Head of caudate nucleus (tissue), 42 donors: ENCODE measurements at regions of chr3 and their contacts with region 1.

Region 1: GRCh38 chr3:50321336-50322114 is 1.0 kb downstream of the HYAL2 start:
- DNase-seq: peak; percentile 77 to 97 (median 91)

Region 2: DNA sequence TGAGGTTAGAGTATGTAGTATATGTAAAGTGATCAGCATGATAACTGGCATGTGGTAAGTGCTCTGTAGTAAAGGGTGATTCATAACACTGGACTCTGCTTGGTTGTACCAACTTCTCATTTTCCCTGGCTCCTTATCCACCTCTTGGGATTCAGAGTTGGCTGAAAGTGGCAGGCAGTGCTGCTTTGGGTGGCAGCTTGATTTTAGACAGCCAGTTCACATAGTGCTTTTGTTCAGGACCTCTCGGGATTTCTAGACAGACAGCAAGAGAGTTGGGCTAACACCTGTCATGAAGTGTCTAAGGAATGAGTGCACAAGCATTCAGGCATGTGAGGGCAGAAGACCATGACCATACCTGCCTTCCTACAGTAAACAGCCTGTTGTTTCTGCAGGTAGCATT is 312.6 kb before region 1 on chr3:
- intact Hi-C with region 1: no loop called
- DNase-seq: no peak

Region 3: DNA sequence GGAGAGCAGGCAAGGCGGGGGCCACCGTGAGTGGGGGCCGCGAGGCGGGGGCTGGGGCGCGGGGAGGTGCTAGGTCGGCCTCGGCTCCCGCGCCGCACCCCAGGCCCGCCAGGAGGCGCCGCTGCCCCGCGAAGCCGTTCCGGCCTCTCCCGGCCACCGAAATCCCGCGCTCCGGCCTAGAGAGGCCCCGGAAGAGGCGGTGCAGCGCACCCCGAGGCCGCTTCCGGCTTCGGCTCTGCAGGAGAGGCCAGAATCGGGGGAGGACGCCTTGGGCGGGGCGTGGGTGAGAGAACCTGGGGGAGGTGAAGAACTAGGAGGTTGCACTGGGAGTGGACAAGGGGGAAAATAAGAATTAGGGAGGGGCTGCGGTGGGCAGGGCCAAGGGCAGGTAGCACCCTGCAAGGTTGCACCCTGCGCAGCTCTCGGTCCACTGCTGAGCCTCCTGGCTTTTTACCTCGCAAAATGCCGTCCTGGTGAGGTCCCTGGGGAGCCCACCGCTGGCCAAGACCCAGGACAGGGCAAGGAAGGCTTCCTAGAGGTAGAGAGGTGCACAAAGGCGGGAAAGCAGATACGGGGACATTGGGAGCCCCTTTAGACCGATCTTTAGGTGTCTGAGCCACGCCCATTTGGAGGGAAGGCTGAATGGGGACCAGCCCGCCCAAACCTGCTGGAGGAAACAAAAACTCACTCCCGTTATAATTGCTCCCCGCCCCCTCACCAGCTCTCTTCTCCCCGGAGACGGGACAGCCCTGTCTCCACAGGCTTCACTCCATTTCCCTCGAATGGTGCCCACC is 93.9 kb before region 1 on chr3:
- intact Hi-C with region 1: loop called (anchors 10 kb)
- DNase-seq: peak; percentile 68 to 96 (median 90)

Region 4: GRCh38 chr3:50337191-50337841 is 15.8 kb after region 1 on chr3:
- intact Hi-C with region 1: no loop called
- DNase-seq: peak; percentile 97 to 100 (median 99)

Region 5: GRCh38 chr3:50436114-50436674 is 114.7 kb after region 1 on chr3:
- intact Hi-C with region 1: no loop called
- DNase-seq: peak in 41 of 42 donors; percentile 52 to 87 (median 73)